CD14-positive monocyte (primary cell): ENCODE measurements at regions of chr6 and their contacts with region 1.

Region 1: GRCh38 chr6:82247634-82248232 is at the start of gene IBTK:
- DNase-seq: peak; percentile 93 to 97 (median 95)
- H3K4me3 ChIP-seq: peak within 1 kb of the TSS; percentile 74 to 89 (median 79)
- H3K4me3 Mint-ChIP-seq: peak within 1 kb of the TSS; percentile 96 to 99
- H3K27ac ChIP-seq: peak within 1 kb of the TSS; percentile 84 to 92
- H3K27ac Mint-ChIP-seq: peak within 1 kb of the TSS; percentile 93 to 98 (median 97)
- H3K4me1 ChIP-seq: peaks cover 16 to 24% of the 10 kb centered on the region in 2 donors
- H3K4me1 Mint-ChIP-seq: peaks cover 31% of the 10 kb centered on the region
- H3K27me3 ChIP-seq: no peaks in the 10 kb centered on the region
- H3K27me3 Mint-ChIP-seq: peaks cover 0 to 2% (median 1%) of the 10 kb centered on the region in 3 donors
- CTCF ChIP-seq: no peak
- polyA plus RNA-seq, gene IBTK: 7.0 to 20.2 (median 13.1) TPM

Region 2: GRCh38 chr6:82166493-82166892 is 81.2 kb before region 1 on chr6:
- intact Hi-C with region 1: no loop called
- DNase-seq: no peak
- H3K4me3 ChIP-seq: no peak overlapping the region
- H3K4me3 Mint-ChIP-seq: no peak overlapping the region
- H3K27ac ChIP-seq: no peak overlapping the region
- H3K27ac Mint-ChIP-seq: no peak overlapping the region
- H3K4me1 ChIP-seq: no peaks in the 10 kb centered on the region
- H3K4me1 Mint-ChIP-seq: no peaks in the 10 kb centered on the region
- H3K27me3 ChIP-seq: no peaks in the 10 kb centered on the region
- H3K27me3 Mint-ChIP-seq: no peaks in the 10 kb centered on the region
- CTCF ChIP-seq: no peak

Region 3: DNA sequence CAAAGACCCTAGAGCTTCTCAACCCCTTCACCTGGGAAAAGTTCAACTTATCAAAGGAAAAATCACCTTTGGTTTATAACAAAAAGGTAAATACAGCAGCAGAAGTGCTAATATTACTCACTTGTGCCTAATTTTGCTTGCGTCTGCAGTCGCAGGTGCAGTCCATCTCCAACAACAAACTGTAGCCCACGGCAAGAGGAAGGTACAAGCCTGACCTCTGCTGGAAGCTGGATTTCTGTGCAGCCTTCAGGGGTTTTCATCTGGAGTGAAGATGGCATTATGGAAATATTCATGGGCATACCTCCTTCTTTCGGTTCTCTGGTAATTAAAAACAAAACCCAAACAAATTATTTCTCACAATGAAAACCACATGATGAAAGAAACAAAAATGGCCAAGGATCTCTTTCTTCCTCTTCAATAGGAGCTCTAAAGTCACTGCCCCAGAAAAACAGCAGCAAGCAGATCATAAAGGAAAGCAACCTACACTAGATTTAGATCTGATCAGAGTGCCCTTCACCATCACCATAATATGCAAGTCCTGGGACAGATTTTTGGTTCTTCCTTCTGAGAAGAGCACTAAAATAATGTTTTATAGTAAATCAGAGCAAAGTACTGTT is 810.1 kb after region 1 on chr6:
- intact Hi-C with region 1: loop called (anchors 5 kb)
- DNase-seq: peak in 1 of 3 donors; percentile 10
- H3K4me3 ChIP-seq: no peak overlapping the region
- H3K4me3 Mint-ChIP-seq: no peak overlapping the region
- H3K27ac ChIP-seq: no peak overlapping the region
- H3K27ac Mint-ChIP-seq: no peak overlapping the region
- H3K4me1 ChIP-seq: no peaks in the 10 kb centered on the region
- H3K4me1 Mint-ChIP-seq: peaks cover 2% of the 10 kb centered on the region
- H3K27me3 ChIP-seq: no peaks in the 10 kb centered on the region
- H3K27me3 Mint-ChIP-seq: peaks cover 0 to 2% (median 0%) of the 10 kb centered on the region in 3 donors
- CTCF ChIP-seq: peak; percentile 59

Region 4: GRCh38 chr6:83192871-83193746 is 945.4 kb after region 1 on chr6 and contains the starts of genes PGM3 and RWDD2A:
- intact Hi-C with region 1: loop called in 1 of 2 experiments (anchors 10 kb)
- DNase-seq: peak; percentile 77 to 88 (median 85)
- H3K4me3 ChIP-seq: peak within 1 kb of the TSS; percentile 70 to 90 (median 70)
- H3K4me3 Mint-ChIP-seq: peak within 1 kb of the TSS; percentile 97 to 100
- H3K27ac ChIP-seq: peak within 1 kb of the TSS in 1 of 2 donors; percentile 75
- H3K27ac Mint-ChIP-seq: peak within 1 kb of the TSS; percentile 83 to 97 (median 91)
- H3K4me1 ChIP-seq: peaks cover 14 to 21% of the 10 kb centered on the region in 2 donors
- H3K4me1 Mint-ChIP-seq: peaks cover 19% of the 10 kb centered on the region
- H3K27me3 ChIP-seq: peaks cover 0 to 7% of the 10 kb centered on the region in 2 donors
- H3K27me3 Mint-ChIP-seq: peaks cover 0 to 8% (median 7%) of the 10 kb centered on the region in 3 donors
- CTCF ChIP-seq: no peak
- polyA plus RNA-seq, gene PGM3: 4.0 to 4.8 (median 4.6) TPM
- polyA plus RNA-seq, gene RWDD2A: 0.77 to 1.2 (median 1.1) TPM

Region 5: DNA sequence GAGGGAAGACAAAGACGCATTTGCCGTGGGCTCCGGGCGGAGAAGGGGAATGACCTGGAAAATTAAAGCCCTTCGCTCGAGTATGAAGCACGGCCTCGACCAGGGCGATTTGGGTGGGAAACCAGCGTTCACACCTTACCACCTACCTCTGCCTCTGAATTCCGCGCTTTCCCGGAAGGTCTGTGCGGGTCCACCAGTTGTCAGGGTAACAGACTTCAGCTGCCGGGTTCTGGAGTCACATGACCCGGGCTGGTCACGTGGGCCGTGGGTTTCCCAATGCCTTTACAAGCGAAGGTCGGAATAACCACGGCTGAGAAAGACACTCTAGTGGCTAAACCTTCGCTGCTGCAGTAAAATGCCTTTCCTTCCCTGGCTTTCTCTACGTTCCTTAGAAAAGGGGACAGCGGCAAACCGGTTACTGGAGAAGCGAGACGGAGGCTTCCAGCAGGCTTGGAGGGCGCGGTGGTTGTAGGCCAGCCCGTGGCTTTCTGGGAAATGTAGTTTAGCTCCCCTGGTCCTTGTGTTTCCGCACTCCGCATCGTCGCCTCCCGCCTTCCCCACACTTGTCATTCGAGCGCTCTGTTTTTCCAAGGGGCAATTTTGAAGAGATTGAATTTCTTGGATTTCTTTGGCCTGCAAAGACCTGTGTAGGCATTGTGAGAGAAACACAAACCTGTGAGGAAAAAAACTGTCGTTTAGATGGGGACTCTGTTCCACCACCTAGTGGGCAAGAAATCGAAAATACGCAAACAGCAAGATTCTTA is 1979.9 kb after region 1 on chr6 and contains the start of gene CEP162:
- intact Hi-C with region 1: loop called in 1 of 2 experiments (anchors 2 kb)
- DNase-seq: peak; percentile 73 to 84 (median 81)
- H3K4me3 ChIP-seq: peak within 1 kb of the TSS; percentile 90 to 97 (median 95)
- H3K4me3 Mint-ChIP-seq: peak within 1 kb of the TSS; percentile 89 to 99
- H3K27ac ChIP-seq: peak within 1 kb of the TSS; percentile 45 to 89
- H3K27ac Mint-ChIP-seq: peak within 1 kb of the TSS; percentile 89 to 98 (median 94)
- H3K4me1 ChIP-seq: peaks cover 11 to 15% of the 10 kb centered on the region in 2 donors
- H3K4me1 Mint-ChIP-seq: peaks cover 31% of the 10 kb centered on the region
- H3K27me3 ChIP-seq: peaks cover 5 to 36% of the 10 kb centered on the region in 2 donors
- H3K27me3 Mint-ChIP-seq: peaks cover 14 to 16% (median 15%) of the 10 kb centered on the region in 3 donors
- CTCF ChIP-seq: peak; percentile 90
- polyA plus RNA-seq, gene CEP162: 1.5 to 2.7 (median 1.6) TPM